ENCODE measurements at regions of chr17 and their contacts with region 1.

Region 1: DNA sequence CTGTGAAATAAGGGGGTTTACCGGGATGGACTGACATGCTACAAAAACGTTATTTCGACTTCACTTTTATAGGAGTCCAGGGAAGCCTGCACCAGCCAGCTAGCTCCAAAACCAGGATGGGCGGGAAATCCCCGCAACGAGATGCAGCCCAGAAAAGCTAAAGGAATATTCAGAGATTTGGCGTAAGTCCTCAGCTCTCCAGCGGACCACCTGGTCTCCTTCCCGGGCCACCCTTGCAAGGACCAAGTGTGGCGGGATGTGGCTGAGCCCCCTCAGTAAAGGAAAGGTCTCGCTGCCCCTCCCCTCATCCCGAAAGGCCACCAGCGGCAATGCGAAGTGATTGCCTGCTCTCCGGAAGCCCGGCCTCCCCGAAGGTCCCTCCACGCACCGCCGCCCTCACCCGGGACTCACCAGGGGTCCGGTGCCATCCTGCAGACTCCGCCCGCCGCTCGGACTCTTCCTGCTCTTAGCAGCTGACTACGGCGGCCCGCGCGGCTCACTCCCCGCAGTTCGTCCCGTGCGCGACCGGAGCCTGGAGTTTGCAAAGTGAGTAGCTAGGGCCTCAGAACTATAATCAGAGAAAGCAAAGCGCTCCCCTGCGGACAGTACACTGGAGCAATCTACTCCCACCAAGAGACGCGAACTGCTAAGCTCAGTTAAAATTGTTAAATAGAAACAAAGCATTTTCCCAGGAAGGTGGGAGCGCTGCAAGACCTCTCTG is at the start of gene STX8:
- DNase-seq: peak; percentile 78
- ATAC-seq: peak; percentile 98
- H3K4me3 ChIP-seq: peak within 1 kb of the TSS; percentile 71 to 95 (median 81)
- H3K27ac ChIP-seq: peak within 1 kb of the TSS; percentile 36
- H3K4me1 ChIP-seq: 0 out of 2 replicates have a peak, but pooled peaks cover 6% of the 10 kb centered on the region
- H3K27me3 ChIP-seq: no peaks in the 10 kb centered on the region
- CTCF ChIP-seq: peak; percentile 43
- EP300 ChIP-seq: peak in 1 of 2 experiments; percentile 34; a peak in 1 of 4 replicates
- POLR2A ChIP-seq: peak; percentile 52 to 73
- RAD21 ChIP-seq: 0 out of 2 replicates have a peak, but pooled peaks have one; percentile 21
- total RNA-seq, gene STX8: 53.6 and 67.9 TPM in 2 replicates

Region 2: GRCh38 chr17:9644910-9645751 is 69.6 kb after region 1 on chr17 and contains the start of gene USP43:
- CTCF ChIA-PET with region 1: no interaction called
- POLR2A ChIA-PET with region 1: no interaction called
- in situ Hi-C with region 1: no loop called
- intact Hi-C with region 1: loop called (anchors 10 kb)
- DNase-seq: peak; percentile 6
- ATAC-seq: peak; percentile 66
- H3K4me3 ChIP-seq: peak within 1 kb of the TSS; percentile 48 to 84 (median 62)
- H3K27ac ChIP-seq: peak within 1 kb of the TSS; percentile 61
- H3K4me1 ChIP-seq: peaks cover 47% of the 10 kb centered on the region
- H3K27me3 ChIP-seq: peaks cover 0 to 6% of the 10 kb centered on the region in 2 experiments; a peak in 2 of 5 replicates
- CTCF ChIP-seq: no peak
- EP300 ChIP-seq: 0 out of 4 replicates have a peak, but pooled peaks of 1 of the 2 experiments have one; percentile 3
- POLR2A ChIP-seq: peak in 1 of 2 experiments; percentile 33; a peak in 1 of 4 replicates
- RAD21 ChIP-seq: no peak
- total RNA-seq, gene USP43: 1.3 and 2.2 TPM in 2 replicates

Region 3: GRCh38 chr17:9676742-9677387 is 101.3 kb after region 1 on chr17:
- CTCF ChIA-PET with region 1: interaction called, 11 read pairs
- POLR2A ChIA-PET with region 1: no interaction called
- in situ Hi-C with region 1: no loop called
- intact Hi-C with region 1: loop called (anchors 1 kb)
- DNase-seq: peak; percentile 32
- ATAC-seq: no peak
- H3K4me3 ChIP-seq: no peak overlapping the region
- H3K27ac ChIP-seq: no peak overlapping the region
- H3K4me1 ChIP-seq: no peaks in the 10 kb centered on the region
- H3K27me3 ChIP-seq: no peaks in the 10 kb centered on the region
- CTCF ChIP-seq: no peak
- EP300 ChIP-seq: no peak
- POLR2A ChIP-seq: no peak
- RAD21 ChIP-seq: no peak

Measured in HepG2 (cell line).